Cardiac septum (tissue), 1 donor: ENCODE measurements at regions of chr11 and their contacts with region 1.

Region 1: GRCh38 chr11:121591405-121592033 is 138.8 kb upstream of the SORL1-AS1 start:
- DNase-seq: no peak

Region 2: DNA sequence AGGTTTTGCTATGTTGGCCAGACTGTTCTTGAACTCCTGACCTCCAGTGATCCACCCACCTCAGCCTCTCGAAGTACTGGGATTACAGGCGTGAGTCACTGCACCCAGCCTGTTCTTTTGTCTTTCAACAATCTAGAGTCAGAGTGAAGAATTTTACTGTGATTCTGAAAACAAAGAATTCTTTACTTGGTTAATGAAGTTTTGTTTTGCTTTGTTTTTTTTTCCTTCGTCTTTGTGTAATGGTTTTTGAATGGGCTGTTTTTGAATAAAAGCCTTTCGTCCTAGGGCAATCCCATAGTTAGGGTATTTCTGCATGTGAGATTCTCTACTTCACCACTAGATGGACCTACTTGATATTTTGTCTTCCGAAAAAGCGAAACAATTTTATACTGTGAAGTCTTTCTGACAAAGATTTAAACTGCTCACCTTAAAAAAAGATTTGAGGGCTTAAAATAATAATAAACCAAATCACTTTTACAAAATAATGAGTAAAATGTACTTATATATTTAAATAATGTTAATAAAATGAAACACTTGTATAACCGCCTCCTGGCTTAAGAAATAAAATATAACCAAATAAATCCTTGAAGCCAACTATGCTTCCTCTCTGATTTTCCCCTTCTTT is 342.4 kb before region 1 on chr11:
- intact Hi-C with region 1: loop called (anchors 5 kb)
- DNase-seq: no peak

Region 3: DNA sequence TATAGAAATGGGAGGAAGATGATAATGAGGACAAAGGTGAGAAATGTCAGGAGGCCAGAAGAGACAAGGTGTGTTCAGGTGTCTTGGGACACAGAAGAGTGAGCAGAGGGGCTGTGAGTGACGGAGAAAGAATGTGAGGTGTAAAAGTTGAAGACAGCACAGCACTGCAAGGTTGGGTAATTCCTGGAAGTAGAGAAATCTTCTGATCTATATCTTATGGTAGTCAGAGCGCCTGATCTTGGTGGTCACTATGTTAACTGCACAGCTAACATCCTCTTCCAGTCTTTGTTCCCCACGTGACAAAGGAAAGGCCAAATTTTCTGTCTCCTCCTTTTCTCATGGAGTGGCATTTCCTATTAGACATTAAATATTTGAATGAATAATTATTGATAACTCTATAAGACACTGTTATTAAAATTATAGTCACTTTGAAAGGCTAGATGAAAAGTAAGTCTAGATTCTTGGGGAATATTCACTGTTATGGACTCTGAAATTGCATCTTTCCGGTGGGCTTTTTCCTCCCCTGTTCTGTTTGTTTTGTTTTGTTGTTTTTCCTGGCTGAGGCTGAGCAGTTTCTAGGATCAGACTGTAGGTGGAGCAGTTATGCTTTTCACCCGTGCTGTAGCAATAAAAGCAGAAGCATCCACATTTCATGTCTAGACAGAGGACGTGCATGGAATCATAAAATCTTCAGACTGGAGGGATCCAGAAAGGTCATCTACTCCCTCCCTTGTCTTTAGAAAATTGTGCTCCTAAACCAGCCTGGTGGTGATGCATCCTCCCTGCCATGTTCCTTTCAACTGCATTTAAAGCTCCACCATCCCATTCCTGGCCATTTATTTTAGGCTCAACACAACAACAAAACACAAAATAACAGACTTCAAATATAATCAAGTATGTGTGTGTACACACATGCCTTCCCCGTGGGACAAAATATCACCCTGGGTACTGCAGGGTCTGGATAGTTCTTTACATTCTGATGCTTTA is 272.4 kb before region 1 on chr11:
- intact Hi-C with region 1: loop called (anchors 1 kb)
- DNase-seq: no peak

Region 4: GRCh38 chr11:121451986-121452608 is 139.4 kb before region 1 on chr11 and contains the start of gene SORL1:
- intact Hi-C with region 1: loop called (anchors 5 kb)
- DNase-seq: peak; percentile 88
- total RNA-seq, gene SORL1: 8.0 TPM

Region 5: GRCh38 chr11:121520243-121521144 is 71.0 kb before region 1 on chr11:
- intact Hi-C with region 1: no loop called
- DNase-seq: no peak

Region 6: GRCh38 chr11:121672630-121673487 is 81.3 kb after region 1 on chr11:
- intact Hi-C with region 1: no loop called
- DNase-seq: no peak

Region 7: GRCh38 chr11:121703201-121703600 is 111.7 kb after region 1 on chr11:
- intact Hi-C with region 1: no loop called
- DNase-seq: no peak